ENCODE measurements at regions of chr19 and their contacts with region 1.

Region 1: GRCh38 chr19:47243776-47244547 is 12.4 kb upstream of the CCDC9 start:
- DNase-seq: peak; percentile 90
- H3K4me3 Mint-ChIP-seq: peak overlapping the region; percentile 80
- H3K27ac Mint-ChIP-seq: peak overlapping the region; percentile 93
- H3K4me1 Mint-ChIP-seq: peaks cover 14% of the 10 kb centered on the region
- H3K27me3 Mint-ChIP-seq: peaks cover 7% of the 10 kb centered on the region

Region 2: GRCh38 chr19:47035127-47036096 is 208.6 kb before region 1 on chr19:
- intact Hi-C with region 1: loop called (anchors 5 kb)
- DNase-seq: peak; percentile 93
- H3K4me3 Mint-ChIP-seq: peak overlapping the region; percentile 86
- H3K27ac Mint-ChIP-seq: peak overlapping the region; percentile 92
- H3K4me1 Mint-ChIP-seq: peaks cover 24% of the 10 kb centered on the region
- H3K27me3 Mint-ChIP-seq: peaks cover 14% of the 10 kb centered on the region

Region 3: DNA sequence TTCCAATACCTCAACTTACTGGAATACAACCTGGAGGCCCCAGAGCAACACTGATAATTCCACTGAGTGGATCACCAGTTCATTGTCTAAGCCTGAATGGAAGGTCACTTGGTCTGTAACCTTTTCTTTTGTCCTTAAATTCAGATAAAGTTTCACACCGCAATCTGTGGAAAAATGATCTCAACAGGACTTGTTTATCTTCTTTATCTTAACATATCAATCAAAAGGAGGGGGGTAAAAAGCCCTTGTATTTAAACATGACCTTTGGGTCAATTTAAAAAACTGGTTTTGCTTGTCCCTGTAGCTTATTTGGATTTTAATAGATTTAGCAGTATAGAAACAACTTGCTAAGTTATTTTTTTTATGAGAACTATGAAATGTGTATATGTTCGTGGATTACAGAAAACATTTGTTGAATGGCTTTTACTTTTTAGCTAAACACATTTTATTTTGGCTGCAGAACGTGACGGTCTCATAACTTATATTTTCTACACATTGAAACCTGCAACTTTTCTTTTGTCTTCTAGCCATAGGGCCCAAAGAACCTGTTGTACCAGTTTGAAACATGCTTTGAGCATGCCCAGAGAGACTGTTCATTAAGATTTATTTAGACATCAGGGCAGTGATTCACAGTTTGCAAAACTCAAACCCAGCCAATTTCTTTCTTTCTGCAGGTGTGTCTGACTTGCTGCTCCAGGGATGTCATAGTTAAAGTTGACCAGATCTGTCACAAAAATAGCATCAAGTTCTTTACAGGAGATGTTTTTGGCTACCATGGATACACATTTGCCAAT is 91.5 kb before region 1 on chr19:
- intact Hi-C with region 1: loop called (anchors 1 kb)
- DNase-seq: no peak
- H3K4me3 Mint-ChIP-seq: no peak overlapping the region
- H3K27ac Mint-ChIP-seq: peak overlapping the region; percentile 34
- H3K4me1 Mint-ChIP-seq: peaks cover 50% of the 10 kb centered on the region
- H3K27me3 Mint-ChIP-seq: no peaks in the 10 kb centered on the region

Region 4: GRCh38 chr19:47210689-47211316 is 33.2 kb before region 1 on chr19:
- intact Hi-C with region 1: loop called (anchors 1 kb)
- DNase-seq: peak; percentile 68
- H3K4me3 Mint-ChIP-seq: no peak overlapping the region
- H3K27ac Mint-ChIP-seq: peak overlapping the region; percentile 88
- H3K4me1 Mint-ChIP-seq: peaks cover 16% of the 10 kb centered on the region
- H3K27me3 Mint-ChIP-seq: no peaks in the 10 kb centered on the region

Region 5: DNA sequence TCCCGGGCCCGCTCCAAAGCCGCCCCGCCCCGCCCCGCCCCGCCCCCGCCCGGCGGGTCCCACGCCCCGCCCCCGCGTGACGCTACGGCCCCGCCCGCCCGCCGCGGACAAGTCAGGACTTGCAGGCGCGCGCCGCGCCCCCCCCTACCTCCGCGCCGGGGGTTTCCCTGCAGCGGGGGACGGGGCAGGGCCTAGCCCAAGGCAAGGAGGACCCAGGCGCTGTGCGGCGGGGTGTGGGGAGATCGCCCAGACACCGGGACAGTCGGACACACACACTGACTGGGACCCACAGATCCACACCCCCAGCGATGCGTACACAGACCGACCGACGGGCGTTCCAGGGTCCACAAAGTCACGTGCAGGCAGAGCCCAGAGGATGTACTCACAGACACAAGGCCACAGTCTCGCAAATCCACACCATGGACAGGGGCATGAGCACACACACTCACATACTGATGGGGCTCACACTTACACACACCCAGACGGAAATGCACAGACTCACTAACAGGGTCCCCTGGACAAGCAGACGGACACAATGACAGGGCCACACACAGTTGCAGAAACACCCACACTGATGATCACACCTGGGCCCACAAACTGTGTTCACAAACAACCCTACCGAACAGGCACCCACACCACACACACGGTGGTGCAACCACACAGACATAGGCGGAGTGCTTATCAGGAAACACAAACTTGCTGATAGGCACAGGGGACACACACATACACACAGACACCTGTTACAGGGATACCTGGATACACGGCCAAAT is 12.6 kb before region 1 on chr19:
- intact Hi-C with region 1: loop called (anchors 1 kb)
- DNase-seq: peak; percentile 93
- H3K4me3 Mint-ChIP-seq: peak overlapping the region; percentile 63
- H3K27ac Mint-ChIP-seq: peak overlapping the region; percentile 74
- H3K4me1 Mint-ChIP-seq: peaks cover 19% of the 10 kb centered on the region
- H3K27me3 Mint-ChIP-seq: peaks cover 4% of the 10 kb centered on the region

Region 6: DNA sequence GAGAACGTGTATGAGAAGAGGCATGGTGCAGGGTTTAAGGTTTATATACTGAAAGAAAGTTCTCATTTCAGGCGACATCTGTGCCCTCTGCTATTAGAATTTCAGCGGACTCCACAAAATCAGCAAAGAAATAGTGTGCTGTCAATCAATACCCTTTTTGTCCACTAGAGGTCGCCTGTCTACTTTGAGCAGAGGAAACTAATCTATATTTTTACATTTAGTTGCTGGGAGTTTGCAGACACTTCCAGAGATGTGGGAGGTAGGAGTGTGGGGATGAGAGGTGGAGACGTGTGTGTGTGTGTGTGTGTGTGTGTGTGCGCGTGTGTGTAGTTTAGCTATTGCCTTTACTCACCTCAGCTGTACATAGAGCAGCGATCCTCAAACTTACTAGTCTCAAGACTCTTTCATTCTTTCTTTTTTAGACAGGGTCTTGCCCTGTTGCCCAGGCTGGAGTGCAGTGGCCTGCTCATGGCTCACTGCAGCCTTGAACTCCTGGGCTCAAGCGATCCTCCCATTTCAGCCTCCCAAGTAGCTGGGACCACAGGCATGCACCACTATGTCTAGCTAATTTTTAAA is 40.5 kb after region 1 on chr19:
- intact Hi-C with region 1: no loop called
- DNase-seq: peak; percentile 30
- H3K4me3 Mint-ChIP-seq: no peak overlapping the region
- H3K27ac Mint-ChIP-seq: no peak overlapping the region
- H3K4me1 Mint-ChIP-seq: peaks cover 13% of the 10 kb centered on the region
- H3K27me3 Mint-ChIP-seq: no peaks in the 10 kb centered on the region